Breast epithelium (tissue), 4 donors: ENCODE measurements at regions of chr7 and their contacts with region 1.

Region 1: GRCh38 chr7:82945480-82945879 is 217.2 kb downstream of the PCLO start:
- DNase-seq: no peak
- H3K4me3 ChIP-seq: no peak overlapping the region
- H3K27ac ChIP-seq: no peak overlapping the region
- H3K4me1 ChIP-seq: no peaks in the 10 kb centered on the region
- H3K27me3 ChIP-seq: no peaks in the 10 kb centered on the region
- CTCF ChIP-seq: no peak
- POLR2A ChIP-seq: no peak

Region 2: DNA sequence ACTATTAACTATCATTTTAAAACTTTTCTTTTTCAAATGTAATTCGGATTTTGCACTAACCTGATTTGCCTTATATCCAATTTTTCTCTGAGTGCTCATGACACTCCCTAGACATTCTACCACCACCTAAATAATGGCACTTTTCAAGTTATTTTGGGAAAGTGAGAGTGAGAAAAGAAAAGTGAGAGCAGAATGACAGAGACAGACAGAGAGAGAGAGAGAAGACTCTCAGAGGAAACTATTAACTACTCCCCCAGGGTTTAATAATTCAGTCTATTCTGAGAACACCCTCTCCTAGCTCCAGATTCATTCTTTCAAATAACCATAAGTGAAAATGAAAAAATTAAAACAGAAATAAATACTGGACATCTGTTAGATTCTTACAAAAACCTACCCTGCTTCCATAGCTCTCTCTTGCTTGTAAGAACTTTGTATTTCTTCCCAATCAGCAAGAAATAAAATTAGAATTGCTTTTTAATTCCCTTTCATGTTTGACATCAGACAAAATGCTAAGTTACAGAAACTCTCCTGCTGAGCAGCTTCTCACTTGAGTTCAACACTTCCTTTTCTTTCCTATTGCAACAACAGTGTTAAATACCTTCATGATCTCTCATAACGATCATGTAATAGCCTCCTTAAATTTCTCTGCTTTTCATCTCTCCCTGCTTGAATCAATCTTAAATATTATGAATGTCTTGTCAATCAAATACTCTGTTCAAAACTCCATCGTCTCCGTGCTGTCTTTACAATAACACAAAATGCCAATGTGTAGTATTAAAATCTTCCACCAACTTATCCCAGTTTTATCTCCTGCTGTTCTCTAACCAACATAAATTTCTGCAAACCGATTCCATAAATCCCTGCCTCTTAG is 511.8 kb after region 1 on chr7:
- intact Hi-C with region 1: loop called (anchors 5 kb)
- DNase-seq: no peak
- H3K4me3 ChIP-seq: no peak overlapping the region
- H3K27ac ChIP-seq: no peak overlapping the region
- H3K4me1 ChIP-seq: no peaks in the 10 kb centered on the region
- H3K27me3 ChIP-seq: no peaks in the 10 kb centered on the region
- CTCF ChIP-seq: no peak
- POLR2A ChIP-seq: no peak